ENCODE measurements at regions of chr16 and their contacts with region 1.

Region 1: GRCh38 chr16:84116720-84117493 is at the start of gene MBTPS1:
- DNase-seq: peak; percentile 96 to 97
- ATAC-seq: peak; percentile 93
- H3K4me3 ChIP-seq: peak within 1 kb of the TSS; percentile 90 to 99 (median 96)
- H3K27ac ChIP-seq: peak within 1 kb of the TSS; percentile 90 to 94 (median 92)
- H3K4me1 ChIP-seq: peaks cover 28 to 38% of the 10 kb centered on the region in 2 donors
- H3K27me3 ChIP-seq: no peaks in the 10 kb centered on the region
- CTCF ChIP-seq: peak in 2 of 5 experiments; percentile 69 to 74
- POLR2A ChIP-seq: peak; percentile 86 to 88
- total RNA-seq, gene MBTPS1: 28.8 to 44.3 (median 38.5) TPM

Region 2: DNA sequence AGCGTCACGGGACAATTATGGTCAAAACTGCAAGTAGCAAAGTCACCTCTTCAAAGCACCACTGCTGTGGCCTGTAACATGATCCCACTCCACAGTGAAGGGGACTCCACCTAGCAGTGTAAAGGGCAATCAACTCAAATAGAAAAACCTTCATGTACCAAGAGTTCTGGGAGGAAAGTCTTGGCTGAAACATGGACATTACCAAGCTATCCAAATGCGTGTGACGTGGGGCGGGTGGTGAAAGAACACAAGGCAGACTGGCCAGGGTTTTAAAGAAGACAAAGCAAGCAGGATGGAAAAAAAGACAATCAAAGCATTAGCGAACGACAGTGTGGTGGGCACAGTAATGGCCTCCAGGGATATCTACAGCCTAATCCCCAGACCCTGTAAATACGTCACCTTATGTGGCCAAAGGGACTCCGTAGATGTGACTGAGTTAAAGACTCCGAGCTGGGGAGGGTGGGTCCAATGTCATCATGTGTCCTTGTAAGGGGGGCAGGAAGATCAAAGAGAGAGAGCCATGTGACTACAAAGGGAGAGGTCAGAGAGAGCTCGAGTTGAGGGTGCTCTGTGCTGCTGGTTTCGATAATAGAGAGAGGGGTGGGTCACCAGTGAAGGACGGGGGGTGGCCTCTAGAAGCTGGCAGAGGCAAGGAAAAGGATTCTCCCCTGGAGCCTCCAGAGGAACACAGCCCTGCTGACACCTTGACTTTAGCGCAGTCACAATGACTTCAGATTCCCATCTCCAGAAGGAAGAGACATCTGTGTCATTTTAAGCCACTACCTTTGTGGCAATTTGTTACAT is 22.1 kb after region 1 on chr16:
- in situ Hi-C with region 1: no loop called
- intact Hi-C with region 1: loop called (anchors 2 kb)
- DNase-seq: peak; percentile 32 to 77
- ATAC-seq: peak; percentile 91 to 93
- H3K4me3 ChIP-seq: peak overlapping the region; percentile 23 to 45 (median 42)
- H3K27ac ChIP-seq: peak overlapping the region; percentile 86 to 92 (median 87)
- H3K4me1 ChIP-seq: peaks cover 12 to 30% of the 10 kb centered on the region in 2 donors
- H3K27me3 ChIP-seq: no peaks in the 10 kb centered on the region
- CTCF ChIP-seq: no peak
- POLR2A ChIP-seq: peak in 1 of 2 donors; percentile 28

Measured in gastrocnemius medialis (tissue), 4 donors.